WTC11 (cell line): ENCODE measurements at regions of chr15 and their contacts with region 1.

Region 1: GRCh38 chr15:86040356-86041033 is 39.2 kb upstream of the AGBL1 start:
- DNase-seq: peak; percentile 55
- ATAC-seq: peak; percentile 94
- H3K4me3 Mint-ChIP-seq: no peak overlapping the region
- H3K27ac Mint-ChIP-seq: peak overlapping the region; percentile 49; the same call in 1 of the 2 replicates
- H3K4me1 Mint-ChIP-seq: peaks cover 53% of the 10 kb centered on the region
- H3K27me3 Mint-ChIP-seq: peaks cover 4% of the 10 kb centered on the region; the same call in 1 of the 2 replicates
- CTCF ChIP-seq: peak; percentile 33; the same call in 1 of the 2 replicates

Region 2: DNA sequence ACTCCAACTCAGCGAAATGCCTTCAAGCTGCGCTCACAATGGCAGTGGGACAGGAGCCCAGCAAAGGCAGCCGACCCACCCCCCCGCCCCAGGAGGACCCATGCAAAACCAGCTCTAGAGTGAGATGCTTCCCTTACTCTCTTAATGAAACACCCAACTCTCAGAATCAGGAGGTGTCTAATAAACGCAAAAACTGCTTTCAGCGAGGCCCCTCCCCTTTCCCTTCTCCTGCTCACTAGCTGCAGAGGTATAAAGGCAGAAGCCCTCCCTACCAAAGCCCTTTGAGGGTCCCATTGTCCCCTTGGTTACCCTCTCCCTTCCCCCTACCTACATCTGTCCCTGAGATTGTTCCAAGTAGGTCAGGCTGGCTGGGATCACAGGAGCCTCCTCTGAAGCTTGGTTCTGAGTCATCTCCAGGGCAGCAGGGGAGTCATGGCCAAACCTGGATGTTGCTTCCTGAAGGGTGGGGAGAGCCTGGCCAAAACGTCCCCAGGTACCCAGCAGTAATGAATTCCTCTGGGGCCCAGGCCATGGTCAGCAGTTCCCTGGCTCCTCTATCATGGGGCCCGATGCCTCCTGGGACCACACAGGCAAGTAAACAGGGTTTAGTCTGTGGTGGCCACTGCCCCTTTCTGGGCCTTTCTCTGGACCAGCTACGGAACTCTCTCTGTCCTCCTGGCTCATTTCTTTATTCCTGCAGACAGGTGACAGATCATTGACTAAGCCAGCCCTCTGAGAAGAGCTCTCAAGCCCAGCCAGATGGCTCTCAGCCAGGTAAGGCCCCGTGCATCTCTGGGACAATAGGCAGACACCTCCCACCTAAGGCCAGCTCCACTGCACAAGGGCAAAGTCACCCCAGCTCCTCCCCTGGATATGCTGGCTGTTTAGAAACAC is 254.4 kb before region 1 on chr15:
- CTCF ChIA-PET with region 1: no interaction called
- POLR2A ChIA-PET with region 1: no interaction called
- DNase-seq: no peak
- ATAC-seq: peak; percentile 53
- H3K4me3 Mint-ChIP-seq: no peak overlapping the region
- H3K27ac Mint-ChIP-seq: peak overlapping the region; percentile 21
- H3K4me1 Mint-ChIP-seq: peaks cover 62% of the 10 kb centered on the region
- H3K27me3 Mint-ChIP-seq: no peaks in the 10 kb centered on the region
- CTCF ChIP-seq: no peak

Region 3: GRCh38 chr15:86063356-86064095 is 23.0 kb after region 1 on chr15:
- CTCF ChIA-PET with region 1: interaction called, 10 read pairs
- POLR2A ChIA-PET with region 1: no interaction called
- DNase-seq: no peak
- ATAC-seq: no peak
- H3K4me3 Mint-ChIP-seq: no peak overlapping the region
- H3K27ac Mint-ChIP-seq: no peak overlapping the region
- H3K4me1 Mint-ChIP-seq: peaks cover 6% of the 10 kb centered on the region; the same call in 1 of the 2 replicates
- H3K27me3 Mint-ChIP-seq: no peaks in the 10 kb centered on the region
- CTCF ChIP-seq: no peak

Region 4: GRCh38 chr15:86115144-86115801 is 74.8 kb after region 1 on chr15:
- CTCF ChIA-PET with region 1: no interaction called
- POLR2A ChIA-PET with region 1: no interaction called
- DNase-seq: no peak
- ATAC-seq: peak; percentile 66
- H3K4me3 Mint-ChIP-seq: no peak overlapping the region
- H3K27ac Mint-ChIP-seq: no peak overlapping the region
- H3K4me1 Mint-ChIP-seq: peaks cover 13% of the 10 kb centered on the region
- H3K27me3 Mint-ChIP-seq: no peaks in the 10 kb centered on the region
- CTCF ChIP-seq: no peak